HepG2 (cell line): ENCODE measurements at regions of chr7 and their contacts with region 1.

Region 1: DNA sequence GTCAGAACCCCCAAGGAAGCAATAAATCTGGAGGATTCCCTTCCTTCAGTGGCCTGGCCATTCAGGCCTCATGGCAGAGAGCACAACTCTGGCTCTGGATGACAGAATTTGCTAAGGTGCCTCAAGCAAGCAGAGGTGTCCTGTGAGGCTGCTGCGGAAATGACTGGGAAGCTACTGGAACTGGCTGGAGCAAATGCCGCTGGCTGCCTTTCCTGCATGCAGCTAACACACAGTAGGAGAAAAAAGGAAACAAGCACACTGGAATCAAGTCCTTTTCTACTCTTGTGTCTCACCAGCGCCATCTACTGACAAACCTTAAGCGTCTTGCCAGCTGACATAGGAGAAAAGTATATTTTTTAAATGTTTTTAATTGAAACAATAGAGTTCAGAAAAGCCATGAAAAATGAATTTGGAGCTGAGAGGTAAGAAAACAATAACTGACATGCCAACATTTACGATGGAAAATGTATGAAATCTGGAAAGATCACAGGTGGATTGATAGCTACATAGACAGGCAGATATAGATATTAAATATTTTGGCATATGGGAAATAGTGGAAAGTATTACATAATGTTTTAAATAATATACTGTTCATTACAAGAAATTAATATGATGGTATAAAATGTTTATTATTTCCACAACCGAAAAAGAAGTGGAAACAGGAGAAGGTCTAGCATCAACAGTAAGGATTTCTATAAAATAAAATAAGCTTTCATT is 951.6 kb downstream of the ANKRD7 start:
- DNase-seq: peak; percentile 67
- ATAC-seq: peak; percentile 67
- H3K4me3 ChIP-seq: no peak overlapping the region
- H3K27ac ChIP-seq: no peak overlapping the region
- H3K4me1 ChIP-seq: no peaks in the 10 kb centered on the region
- H3K27me3 ChIP-seq: no peaks in the 10 kb centered on the region; a peak in 1 of 5 replicates
- CTCF ChIP-seq: peak; percentile 70
- EP300 ChIP-seq: no peak
- POLR2A ChIP-seq: no peak
- RAD21 ChIP-seq: 0 out of 2 replicates have a peak, but pooled peaks have one; percentile 23

Region 2: GRCh38 chr7:118352854-118353453 is 823.1 kb before region 1 on chr7:
- CTCF ChIA-PET with region 1: interaction called, 11 read pairs
- POLR2A ChIA-PET with region 1: no interaction called
- in situ Hi-C with region 1: loop called (anchors 25 kb)
- intact Hi-C with region 1: loop called (anchors 2 kb)
- DNase-seq: peak; percentile 31
- ATAC-seq: peak; percentile 43; the same call in 1 of the 3 replicates
- H3K4me3 ChIP-seq: no peak overlapping the region
- H3K27ac ChIP-seq: no peak overlapping the region
- H3K4me1 ChIP-seq: no peaks in the 10 kb centered on the region
- H3K27me3 ChIP-seq: no peaks in the 10 kb centered on the region
- CTCF ChIP-seq: peak; percentile 57
- EP300 ChIP-seq: no peak
- POLR2A ChIP-seq: no peak
- RAD21 ChIP-seq: no peak

Region 3: GRCh38 chr7:118870187-118870586 is 305.9 kb before region 1 on chr7:
- CTCF ChIA-PET with region 1: interaction called, 4 read pairs
- POLR2A ChIA-PET with region 1: no interaction called
- in situ Hi-C with region 1: no loop called
- intact Hi-C with region 1: loop called (anchors 1 kb)
- DNase-seq: peak; percentile 3
- ATAC-seq: peak; percentile 72
- H3K4me3 ChIP-seq: no peak overlapping the region
- H3K27ac ChIP-seq: no peak overlapping the region
- H3K4me1 ChIP-seq: peaks cover 18% of the 10 kb centered on the region
- H3K27me3 ChIP-seq: no peaks in the 10 kb centered on the region
- CTCF ChIP-seq: peak; percentile 40; the same call in 1 of the 2 replicates
- EP300 ChIP-seq: no peak
- POLR2A ChIP-seq: no peak
- RAD21 ChIP-seq: no peak

Region 4: DNA sequence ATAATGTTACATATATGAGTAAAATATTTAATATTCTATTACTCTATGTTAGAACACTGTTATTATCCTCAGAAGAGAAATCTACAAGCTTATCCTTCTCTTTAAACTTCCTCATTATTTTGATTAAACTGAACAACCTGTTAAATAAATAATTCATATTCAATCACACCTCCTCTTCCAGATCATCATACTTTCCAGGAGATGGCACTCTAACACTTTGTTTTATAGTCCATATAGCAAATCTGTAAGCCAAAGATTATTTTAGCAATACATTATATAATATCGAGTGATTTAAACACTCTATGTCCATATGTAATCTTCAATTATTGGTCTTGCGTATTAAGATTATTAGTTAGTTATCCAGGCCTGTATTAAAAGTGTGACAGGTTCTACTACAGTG is 257.5 kb before region 1 on chr7:
- CTCF ChIA-PET with region 1: interaction called, 7 read pairs
- POLR2A ChIA-PET with region 1: no interaction called
- in situ Hi-C with region 1: loop called (anchors 10 kb)
- intact Hi-C with region 1: loop called (anchors 1 kb)
- DNase-seq: peak; percentile 15
- ATAC-seq: no peak
- H3K4me3 ChIP-seq: no peak overlapping the region
- H3K27ac ChIP-seq: no peak overlapping the region
- H3K4me1 ChIP-seq: no peaks in the 10 kb centered on the region
- H3K27me3 ChIP-seq: no peaks in the 10 kb centered on the region
- CTCF ChIP-seq: 0 out of 2 replicates have a peak, but pooled peaks have one; percentile 24
- EP300 ChIP-seq: no peak
- POLR2A ChIP-seq: no peak
- RAD21 ChIP-seq: no peak

Region 5: DNA sequence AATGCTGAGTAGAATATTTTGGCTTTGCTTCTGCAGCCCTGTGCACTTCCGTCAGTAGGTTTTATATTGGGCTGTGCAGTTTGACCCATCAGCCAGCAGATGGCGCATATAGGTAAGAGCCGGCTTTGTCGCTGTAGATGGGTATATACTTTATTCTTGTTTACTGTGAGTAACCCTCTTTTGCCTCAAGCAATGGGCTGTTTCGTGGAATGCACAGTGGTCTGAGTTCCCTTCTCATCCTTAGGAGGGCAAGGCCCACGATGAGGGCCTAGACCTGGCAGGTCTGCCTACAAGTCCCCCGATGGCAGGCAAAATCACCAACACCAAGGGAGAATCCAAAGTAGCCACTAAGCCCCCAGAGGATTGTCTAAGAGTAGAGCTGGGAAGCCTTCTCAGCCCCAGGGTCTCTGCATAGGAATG is 94.0 kb after region 1 on chr7:
- CTCF ChIA-PET with region 1: no interaction called
- POLR2A ChIA-PET with region 1: no interaction called
- in situ Hi-C with region 1: no loop called
- intact Hi-C with region 1: no loop called
- DNase-seq: peak; percentile 66
- ATAC-seq: peak; percentile 97
- H3K4me3 ChIP-seq: no peak overlapping the region
- H3K27ac ChIP-seq: no peak overlapping the region
- H3K4me1 ChIP-seq: no peaks in the 10 kb centered on the region
- H3K27me3 ChIP-seq: no peaks in the 10 kb centered on the region
- CTCF ChIP-seq: peak; percentile 79
- EP300 ChIP-seq: no peak
- POLR2A ChIP-seq: no peak
- RAD21 ChIP-seq: peak; percentile 35; the same call in 1 of the 2 replicates

Region 6: GRCh38 chr7:119620769-119621168 is 444.7 kb after region 1 on chr7:
- CTCF ChIA-PET with region 1: no interaction called
- POLR2A ChIA-PET with region 1: no interaction called
- in situ Hi-C with region 1: no loop called
- intact Hi-C with region 1: no loop called
- DNase-seq: no peak
- ATAC-seq: no peak
- H3K4me3 ChIP-seq: no peak overlapping the region
- H3K27ac ChIP-seq: no peak overlapping the region
- H3K4me1 ChIP-seq: no peaks in the 10 kb centered on the region
- H3K27me3 ChIP-seq: no peaks in the 10 kb centered on the region
- CTCF ChIP-seq: no peak
- EP300 ChIP-seq: no peak
- POLR2A ChIP-seq: no peak
- RAD21 ChIP-seq: no peak